Tibial artery (tissue), 4 donors: ENCODE measurements at regions of chr5 and their contacts with region 1.

Region 1: GRCh38 chr5:169583424-169584204 is at the start of gene SPDL1:
- DNase-seq: peak; percentile 93 to 97
- H3K4me3 ChIP-seq: peak within 1 kb of the TSS; percentile 65 to 93
- H3K27ac ChIP-seq: peak within 1 kb of the TSS; percentile 68 to 73
- H3K4me1 ChIP-seq: peaks cover 0 to 9% (median 8%) of the 10 kb centered on the region in 4 donors
- H3K27me3 ChIP-seq: no peaks in the 10 kb centered on the region
- CTCF ChIP-seq: no peak

Region 2: DNA sequence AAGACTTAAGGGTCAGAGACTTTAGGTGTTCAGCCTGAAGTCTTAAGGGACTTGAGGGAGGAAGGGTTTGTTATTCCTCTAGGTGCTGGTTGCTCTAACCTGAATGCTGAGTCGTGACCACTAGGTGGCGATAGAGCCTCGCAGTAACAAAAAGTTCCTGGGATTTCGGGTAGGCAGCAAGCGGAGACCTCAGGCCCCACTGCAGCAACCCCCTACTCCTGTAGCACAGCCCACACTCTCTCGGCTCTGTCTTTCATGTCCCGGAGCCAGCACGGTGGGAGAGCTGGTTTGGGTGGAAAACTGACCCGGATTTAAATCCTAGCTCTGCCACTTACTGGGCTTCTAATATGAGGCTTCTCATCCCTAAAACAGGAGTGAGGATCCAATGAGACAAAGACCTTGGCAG is 904.1 kb before region 1 on chr5:
- intact Hi-C with region 1: loop called (anchors 5 kb)
- DNase-seq: peak; percentile 70 to 81
- H3K4me3 ChIP-seq: no peak overlapping the region
- H3K27ac ChIP-seq: peak overlapping the region in 1 of 2 donors; percentile 78
- H3K4me1 ChIP-seq: peaks cover 0 to 30% (median 15%) of the 10 kb centered on the region in 4 donors
- H3K27me3 ChIP-seq: no peaks in the 10 kb centered on the region
- CTCF ChIP-seq: peak; percentile 81 to 90

Region 3: GRCh38 chr5:169610606-169611005 is 27.0 kb after region 1 on chr5:
- intact Hi-C with region 1: no loop called
- DNase-seq: no peak
- H3K4me3 ChIP-seq: no peak overlapping the region
- H3K27ac ChIP-seq: no peak overlapping the region
- H3K4me1 ChIP-seq: no peaks in the 10 kb centered on the region
- H3K27me3 ChIP-seq: no peaks in the 10 kb centered on the region
- CTCF ChIP-seq: no peak

Region 4: DNA sequence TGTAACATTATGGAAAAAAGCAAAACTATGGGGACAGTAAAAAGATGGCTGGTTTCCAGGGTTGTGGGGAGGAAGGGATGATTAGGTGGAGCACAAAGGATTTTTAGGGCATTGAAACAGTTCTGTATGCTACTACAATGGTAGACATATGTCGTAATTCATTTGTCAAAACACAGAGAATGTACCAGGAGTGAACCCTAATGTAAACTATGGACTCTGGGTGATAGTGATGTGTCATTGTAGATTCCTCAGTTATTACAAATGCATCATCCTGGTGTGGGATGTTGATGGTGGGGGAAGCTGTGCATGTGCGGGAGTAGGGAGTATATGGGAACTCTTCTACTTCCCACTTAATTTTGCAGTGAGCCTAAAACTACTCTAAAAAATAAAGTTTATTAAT is 1064.9 kb after region 1 on chr5:
- intact Hi-C with region 1: no loop called
- DNase-seq: no peak
- H3K4me3 ChIP-seq: no peak overlapping the region
- H3K27ac ChIP-seq: no peak overlapping the region
- H3K4me1 ChIP-seq: no peaks in the 10 kb centered on the region
- H3K27me3 ChIP-seq: peaks cover 0 to 7% of the 10 kb centered on the region in 2 donors
- CTCF ChIP-seq: no peak